T-cell (primary cell): ENCODE measurements at regions of chr3 and their contacts with region 1.

Region 1: DNA sequence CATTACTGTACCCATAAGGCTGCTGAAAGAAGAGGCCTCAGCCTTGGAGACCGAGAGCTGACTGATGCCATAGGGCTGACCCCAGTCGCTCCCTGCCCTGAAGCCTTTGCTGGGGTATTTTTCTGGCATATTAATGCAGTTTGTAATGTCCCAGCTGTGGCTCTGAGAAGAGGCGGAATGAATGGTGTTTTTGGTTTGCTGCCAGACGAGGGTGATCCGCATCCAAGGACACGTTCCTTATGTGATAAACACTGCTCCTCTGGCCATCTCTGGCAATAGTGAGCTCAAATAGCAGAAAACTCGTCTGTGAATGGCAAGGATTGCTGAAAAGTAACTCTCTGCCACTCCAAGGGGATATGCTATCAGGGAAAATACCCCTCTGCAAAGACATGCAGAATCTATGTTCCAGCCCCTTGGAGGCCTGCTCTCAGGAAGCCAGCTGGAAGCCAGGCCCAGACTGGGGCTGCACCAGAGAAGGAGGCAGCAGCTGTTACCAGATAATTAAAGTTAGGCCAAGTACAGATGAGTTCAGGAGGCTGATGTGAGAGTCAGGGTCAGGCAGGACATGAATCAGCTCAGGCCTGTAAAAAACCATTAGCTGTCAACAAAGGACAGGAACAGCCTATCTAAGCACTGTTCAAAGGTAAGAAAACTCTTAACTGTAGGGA is 28.9 kb upstream of the KLHL6 start:
- DNase-seq: no peak
- ATAC-seq: no peak
- H3K4me3 ChIP-seq: no peak overlapping the region
- H3K4me3 Mint-ChIP-seq: no peak overlapping the region
- H3K27ac ChIP-seq: no peak overlapping the region
- H3K27ac Mint-ChIP-seq: peak overlapping the region; percentile 57 to 77
- H3K4me1 ChIP-seq: peaks cover 28 to 30% of the 10 kb centered on the region in 2 experiments
- H3K4me1 Mint-ChIP-seq: peaks cover 41 to 75% (median 58%) of the 10 kb centered on the region in 3 donors
- H3K27me3 ChIP-seq: no peaks in the 10 kb centered on the region
- H3K27me3 Mint-ChIP-seq: no peaks in the 10 kb centered on the region

Region 2: GRCh38 chr3:181999314-181999713 is 1585.1 kb before region 1 on chr3:
- CTCF ChIA-PET with region 1: no interaction called
- POLR2A ChIA-PET with region 1: no interaction called
- DNase-seq: no peak
- ATAC-seq: no peak
- H3K4me3 ChIP-seq: no peak overlapping the region
- H3K4me3 Mint-ChIP-seq: no peak overlapping the region
- H3K27ac ChIP-seq: no peak overlapping the region
- H3K27ac Mint-ChIP-seq: no peak overlapping the region
- H3K4me1 ChIP-seq: no peaks in the 10 kb centered on the region
- H3K4me1 Mint-ChIP-seq: no peaks in the 10 kb centered on the region
- H3K27me3 ChIP-seq: no peaks in the 10 kb centered on the region
- H3K27me3 Mint-ChIP-seq: no peaks in the 10 kb centered on the region

Region 3: DNA sequence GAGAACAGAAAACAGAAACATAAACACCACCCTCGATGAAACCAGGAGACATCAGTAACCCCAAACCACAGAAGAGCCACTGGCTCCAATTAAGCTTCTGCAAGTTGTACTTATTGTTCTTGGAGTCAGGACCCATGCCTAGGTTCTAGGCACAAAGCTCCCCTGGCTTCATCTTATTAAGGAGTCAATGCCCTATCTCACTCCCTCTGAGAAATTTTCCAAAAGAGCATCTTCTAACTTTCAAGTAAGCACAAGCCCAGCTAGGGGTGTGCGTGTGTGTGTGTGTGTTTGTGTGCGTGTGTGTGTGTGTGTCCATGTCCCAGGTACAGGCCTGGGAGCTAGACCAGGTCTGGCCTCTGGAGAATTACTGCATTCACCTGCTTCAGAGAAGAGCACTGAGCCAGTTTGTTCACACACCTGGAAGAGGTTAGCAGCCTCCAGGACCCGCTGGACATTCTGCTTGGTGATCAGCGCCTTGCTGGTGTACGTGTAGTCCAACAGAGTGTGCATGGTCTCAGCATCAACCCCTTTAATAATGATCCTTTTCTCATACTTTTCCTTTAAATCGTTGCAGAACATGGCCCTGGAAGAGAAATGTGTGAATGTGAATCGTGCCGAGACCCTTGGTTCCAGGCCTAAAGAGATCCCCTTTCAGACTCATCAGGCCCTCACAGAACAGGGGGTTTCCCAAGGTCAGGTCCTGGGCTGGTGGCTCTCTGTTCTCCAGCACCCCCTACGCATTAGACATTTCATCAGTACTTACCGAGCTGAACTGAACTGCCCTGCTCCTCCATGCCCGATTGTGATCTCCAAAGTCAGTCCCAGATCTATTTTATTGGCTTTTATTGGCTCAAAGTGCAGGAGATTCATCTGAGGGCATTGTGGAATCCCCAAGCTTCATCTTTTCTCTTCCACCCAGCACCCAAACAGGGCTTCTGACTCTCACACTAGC is 56.7 kb before region 1 on chr3:
- CTCF ChIA-PET with region 1: no interaction called
- POLR2A ChIA-PET with region 1: no interaction called
- DNase-seq: no peak
- ATAC-seq: peak in 1 of 4 experiments; percentile 29
- H3K4me3 ChIP-seq: no peak overlapping the region
- H3K4me3 Mint-ChIP-seq: no peak overlapping the region
- H3K27ac ChIP-seq: no peak overlapping the region
- H3K27ac Mint-ChIP-seq: peak overlapping the region; percentile 76
- H3K4me1 ChIP-seq: peaks cover 2 to 11% of the 10 kb centered on the region in 2 experiments
- H3K4me1 Mint-ChIP-seq: peaks cover 49 to 57% (median 53%) of the 10 kb centered on the region in 3 donors
- H3K27me3 ChIP-seq: no peaks in the 10 kb centered on the region
- H3K27me3 Mint-ChIP-seq: no peaks in the 10 kb centered on the region

Region 4: DNA sequence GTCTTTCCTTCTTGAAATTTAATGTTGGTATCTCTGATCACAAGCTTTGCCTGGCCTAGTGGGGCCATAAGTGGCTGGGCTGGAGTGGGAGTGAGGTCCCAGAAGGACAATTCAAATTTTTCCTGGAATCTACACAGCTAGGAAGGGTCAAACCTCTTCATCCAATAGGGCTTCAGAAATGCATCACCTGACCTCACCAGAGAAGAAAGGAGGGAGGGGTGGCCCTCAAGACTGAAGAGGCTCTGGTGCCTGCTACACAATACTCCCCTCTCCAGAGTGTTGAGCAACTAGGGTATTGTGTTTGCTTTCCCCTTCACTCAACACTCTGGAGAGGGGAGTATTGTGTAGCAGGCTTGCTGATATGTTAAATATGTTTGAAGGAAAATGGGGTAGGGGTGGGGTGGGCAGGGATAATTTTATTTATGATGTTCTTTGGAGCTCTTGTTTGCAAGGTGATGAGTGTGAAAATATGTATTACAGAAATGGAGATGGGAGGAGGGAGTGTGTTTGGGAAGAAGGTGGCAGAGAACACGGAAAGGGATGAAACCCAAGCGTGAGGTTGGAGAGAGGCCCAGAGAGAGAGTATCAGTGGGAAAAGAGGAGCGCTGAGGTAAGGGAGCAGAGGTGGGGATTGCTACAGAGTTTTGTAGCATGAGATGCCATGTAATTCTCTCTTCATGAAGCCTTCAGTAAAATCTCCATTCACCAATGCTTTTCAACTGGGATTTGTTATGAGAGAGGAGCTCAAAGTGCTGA is 45.3 kb after region 1 on chr3:
- CTCF ChIA-PET with region 1: no interaction called
- POLR2A ChIA-PET with region 1: no interaction called
- DNase-seq: no peak
- ATAC-seq: no peak
- H3K4me3 ChIP-seq: no peak overlapping the region
- H3K4me3 Mint-ChIP-seq: no peak overlapping the region
- H3K27ac ChIP-seq: no peak overlapping the region
- H3K27ac Mint-ChIP-seq: no peak overlapping the region
- H3K4me1 ChIP-seq: peaks cover 0 to 1% of the 10 kb centered on the region in 2 experiments
- H3K4me1 Mint-ChIP-seq: peaks cover 3 to 7% (median 5%) of the 10 kb centered on the region in 3 donors
- H3K27me3 ChIP-seq: peaks cover 0 to 8% of the 10 kb centered on the region in 2 experiments
- H3K27me3 Mint-ChIP-seq: peaks cover 0 to 2% of the 10 kb centered on the region in 2 donors

Region 5: DNA sequence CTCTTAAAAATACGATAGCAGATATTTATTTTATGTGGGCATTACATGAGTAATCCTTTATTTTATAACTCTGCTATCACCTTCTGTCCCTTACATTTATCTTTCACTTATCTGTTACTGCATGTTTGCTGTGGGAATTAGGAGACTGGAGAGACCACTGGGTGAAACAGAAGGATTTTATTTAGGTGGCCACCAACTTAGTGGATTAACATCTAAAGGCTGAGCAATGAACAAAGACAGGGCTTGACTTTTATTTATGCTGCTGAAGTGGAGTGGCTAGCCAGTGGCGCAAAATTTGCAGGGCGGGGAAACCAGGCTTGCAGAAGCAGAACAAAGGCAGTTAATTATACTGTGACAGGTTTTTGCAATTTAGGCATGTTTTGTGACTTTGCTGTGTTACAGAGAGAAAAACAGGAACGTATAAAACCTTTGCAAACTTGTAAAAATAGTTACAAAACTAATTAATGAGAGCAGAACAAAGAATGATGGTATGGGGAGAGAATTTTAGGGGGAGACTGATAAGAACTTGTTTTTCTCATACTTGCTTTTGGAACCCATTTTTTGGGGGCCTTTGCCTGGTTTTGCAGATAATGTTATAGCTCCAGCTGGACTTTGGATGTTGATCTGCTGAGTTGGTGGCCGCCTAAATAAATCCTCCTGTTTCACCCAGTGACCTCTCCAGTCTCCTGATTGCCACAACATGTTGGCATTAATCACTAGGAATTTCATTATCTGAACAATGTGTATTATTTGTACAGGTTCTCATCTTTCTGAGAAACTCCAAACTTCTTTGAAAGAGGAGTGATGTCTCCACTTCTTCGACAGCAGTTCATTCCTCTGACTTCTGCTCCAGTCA is 69.1 kb after region 1 on chr3:
- CTCF ChIA-PET with region 1: no interaction called
- POLR2A ChIA-PET with region 1: no interaction called
- DNase-seq: peak in 1 of 35 experiments; percentile 25
- ATAC-seq: no peak
- H3K4me3 ChIP-seq: no peak overlapping the region
- H3K4me3 Mint-ChIP-seq: no peak overlapping the region
- H3K27ac ChIP-seq: no peak overlapping the region
- H3K27ac Mint-ChIP-seq: no peak overlapping the region
- H3K4me1 ChIP-seq: no peaks in the 10 kb centered on the region
- H3K4me1 Mint-ChIP-seq: peaks cover 22 to 24% (median 22%) of the 10 kb centered on the region in 3 donors
- H3K27me3 ChIP-seq: no peaks in the 10 kb centered on the region
- H3K27me3 Mint-ChIP-seq: no peaks in the 10 kb centered on the region

Region 6: DNA sequence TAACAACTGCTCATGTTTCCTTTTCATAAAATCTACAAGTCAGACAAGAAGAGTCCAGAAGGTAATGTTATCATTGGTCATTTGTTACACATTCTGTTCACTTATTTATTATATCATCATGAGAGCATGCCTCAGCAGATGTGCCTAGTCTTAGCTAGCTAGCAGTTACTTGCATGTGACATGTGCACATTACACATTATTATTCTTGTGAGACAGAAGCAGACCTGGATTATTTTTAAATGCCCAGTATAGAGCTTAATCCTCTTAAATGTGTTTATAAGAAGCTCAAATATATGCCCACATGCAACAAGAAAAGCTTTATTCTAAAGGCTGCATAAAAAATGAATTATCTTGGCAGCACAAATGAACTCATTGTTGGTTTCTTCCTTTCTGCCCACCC is 125.9 kb after region 1 on chr3:
- CTCF ChIA-PET with region 1: no interaction called
- POLR2A ChIA-PET with region 1: interaction called in 1 of 2 experiments, 15 read pairs
- DNase-seq: no peak
- ATAC-seq: no peak
- H3K4me3 ChIP-seq: no peak overlapping the region
- H3K4me3 Mint-ChIP-seq: no peak overlapping the region
- H3K27ac ChIP-seq: no peak overlapping the region
- H3K27ac Mint-ChIP-seq: no peak overlapping the region
- H3K4me1 ChIP-seq: no peaks in the 10 kb centered on the region
- H3K4me1 Mint-ChIP-seq: peaks cover 15 to 18% (median 17%) of the 10 kb centered on the region in 3 donors
- H3K27me3 ChIP-seq: no peaks in the 10 kb centered on the region
- H3K27me3 Mint-ChIP-seq: no peaks in the 10 kb centered on the region